ENCODE measurements at regions of chr22 and their contacts with region 1.

Region 1: DNA sequence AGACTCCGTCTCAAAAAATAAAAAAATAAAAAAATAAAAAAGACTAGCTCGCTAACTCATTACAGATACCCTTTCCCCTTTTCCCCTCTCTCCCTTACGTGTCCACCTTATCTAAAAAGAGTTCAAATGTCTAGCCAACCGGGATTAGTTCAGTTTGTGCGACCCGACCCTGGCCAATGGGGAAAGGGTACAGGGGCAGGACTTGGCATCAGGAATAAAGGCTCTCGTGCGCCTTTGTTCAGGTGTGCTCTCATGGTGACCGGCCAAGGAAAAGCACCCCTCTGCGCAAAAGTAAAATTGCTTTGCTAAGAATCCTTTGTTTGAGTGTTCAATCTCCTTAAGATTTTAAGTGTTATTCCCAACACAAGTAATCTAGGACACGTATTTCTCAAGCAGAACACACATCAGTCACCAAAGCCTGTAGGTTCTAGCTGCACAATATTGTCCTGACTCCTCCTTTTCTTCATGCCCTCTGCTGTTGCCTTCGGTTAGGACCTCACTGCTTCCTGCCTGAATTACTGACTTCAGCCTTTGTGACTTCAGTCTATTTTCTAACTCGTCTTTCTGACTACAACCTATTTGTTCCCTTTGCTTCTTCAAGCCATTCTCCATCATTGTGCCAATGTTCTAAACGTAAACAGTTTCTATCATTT is 20.7 kb upstream of the CECR2 start:
- DNase-seq: no peak
- H3K4me3 ChIP-seq: no peak overlapping the region
- H3K27ac ChIP-seq: no peak overlapping the region
- H3K4me1 ChIP-seq: no peaks in the 10 kb centered on the region
- H3K27me3 ChIP-seq: no peaks in the 10 kb centered on the region
- CTCF ChIP-seq: no peak
- EP300 ChIP-seq: no peak
- POLR2A ChIP-seq: no peak

Region 2: GRCh38 chr22:17272511-17272991 is 76.0 kb before region 1 on chr22:
- intact Hi-C with region 1: loop called in 1 of 4 experiments (anchors 10 kb)
- DNase-seq: no peak
- H3K4me3 ChIP-seq: no peak overlapping the region
- H3K27ac ChIP-seq: no peak overlapping the region
- H3K4me1 ChIP-seq: no peaks in the 10 kb centered on the region
- H3K27me3 ChIP-seq: no peaks in the 10 kb centered on the region
- CTCF ChIP-seq: no peak
- EP300 ChIP-seq: no peak
- POLR2A ChIP-seq: no peak

Region 3: GRCh38 chr22:17319546-17319945 is 29.0 kb before region 1 on chr22:
- intact Hi-C with region 1: no loop called
- DNase-seq: no peak
- H3K4me3 ChIP-seq: no peak overlapping the region
- H3K27ac ChIP-seq: no peak overlapping the region
- H3K4me1 ChIP-seq: no peaks in the 10 kb centered on the region
- H3K27me3 ChIP-seq: no peaks in the 10 kb centered on the region
- CTCF ChIP-seq: no peak
- EP300 ChIP-seq: no peak
- POLR2A ChIP-seq: no peak